ENCODE measurements at regions of chr16 and their contacts with region 1.

Region 1: DNA sequence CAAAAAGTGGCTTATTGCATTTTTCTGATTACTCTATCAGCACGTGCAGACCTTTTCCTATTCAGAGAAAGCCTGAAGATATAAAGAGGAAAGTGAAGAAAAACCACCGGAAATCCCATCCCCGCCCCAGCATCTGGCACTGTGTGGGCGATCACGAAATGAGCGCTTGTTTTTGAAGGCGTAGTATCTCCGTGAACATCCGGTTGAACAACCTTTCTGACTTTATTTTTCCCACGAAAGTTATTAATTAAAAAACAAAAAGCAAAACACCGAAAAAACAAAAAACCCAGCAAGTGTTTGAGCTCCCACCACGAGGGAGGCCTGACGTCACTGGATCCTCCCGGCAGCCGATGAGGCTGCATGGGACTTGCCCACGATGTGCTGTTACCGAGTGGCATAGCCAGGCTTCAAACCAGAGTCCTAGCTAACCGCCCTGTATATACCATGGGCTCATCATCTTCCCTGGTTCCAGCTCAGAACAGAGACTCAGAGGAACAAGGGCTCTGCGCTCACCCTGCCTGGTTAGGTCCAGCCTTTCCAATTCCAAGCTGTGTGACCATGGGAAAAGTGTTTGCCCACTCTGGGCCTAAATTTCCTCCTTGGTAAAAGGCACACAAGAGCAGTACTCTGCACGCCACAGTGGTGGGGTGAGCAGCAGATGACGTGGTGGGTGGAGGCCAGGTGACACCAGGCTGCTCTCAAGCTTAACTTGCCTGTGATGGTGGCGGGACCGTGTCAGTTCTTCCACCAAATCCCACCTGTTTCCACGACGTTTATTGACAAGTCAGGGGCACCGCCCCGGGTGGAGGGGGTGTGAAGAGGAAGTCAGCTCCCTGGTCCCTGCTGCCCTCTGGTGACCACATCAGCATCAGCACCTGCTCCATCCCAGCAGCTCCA is 34.3 kb upstream of the IL21R start:
- DNase-seq: peak; percentile 92
- ATAC-seq: peak; percentile 83
- H3K4me3 Mint-ChIP-seq: peak overlapping the region; percentile 49
- H3K27ac Mint-ChIP-seq: peak overlapping the region; percentile 95
- H3K4me1 Mint-ChIP-seq: peaks cover 36% of the 10 kb centered on the region
- H3K27me3 Mint-ChIP-seq: no peaks in the 10 kb centered on the region

Region 2: GRCh38 chr16:27154705-27155521 is 212.8 kb before region 1 on chr16:
- CTCF ChIA-PET with region 1: interaction called, 16 read pairs
- DNase-seq: peak; percentile 71
- ATAC-seq: peak; percentile 67
- H3K4me3 Mint-ChIP-seq: no peak overlapping the region
- H3K27ac Mint-ChIP-seq: no peak overlapping the region
- H3K4me1 Mint-ChIP-seq: peaks cover 8% of the 10 kb centered on the region
- H3K27me3 Mint-ChIP-seq: no peaks in the 10 kb centered on the region

Region 3: DNA sequence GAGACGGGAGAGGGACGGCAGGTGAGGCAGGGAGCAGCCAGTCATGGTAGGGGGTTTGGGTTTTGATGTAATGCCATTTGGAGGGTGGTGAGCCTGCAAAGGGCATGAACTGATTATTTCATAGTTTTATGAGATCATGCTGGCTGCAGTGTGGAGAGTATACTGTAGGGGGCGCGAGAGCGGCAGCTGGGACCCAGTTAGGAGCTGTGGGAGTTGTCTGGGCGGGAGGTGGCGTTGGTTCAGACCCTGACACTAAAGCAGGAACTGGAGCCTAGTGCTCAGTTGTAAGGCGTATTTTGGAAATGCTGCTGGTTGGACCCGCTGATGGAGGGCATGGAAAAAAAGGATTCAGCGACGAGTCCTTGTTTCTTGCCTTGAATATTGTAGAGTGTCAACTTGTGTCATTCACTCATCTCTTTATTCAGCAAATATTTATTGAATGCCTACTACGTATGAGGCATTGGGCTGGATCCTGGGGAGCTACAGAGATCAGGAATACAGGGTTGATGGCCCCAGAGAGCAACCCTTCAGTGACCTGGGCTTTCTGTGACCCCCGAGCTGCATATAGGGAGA is 188.1 kb before region 1 on chr16:
- CTCF ChIA-PET with region 1: interaction called, 104 read pairs
- DNase-seq: peak; percentile 93
- ATAC-seq: peak; percentile 98
- H3K4me3 Mint-ChIP-seq: no peak overlapping the region
- H3K27ac Mint-ChIP-seq: peak overlapping the region; percentile 65
- H3K4me1 Mint-ChIP-seq: peaks cover 23% of the 10 kb centered on the region
- H3K27me3 Mint-ChIP-seq: peaks cover 13% of the 10 kb centered on the region

Region 4: GRCh38 chr16:27228621-27229501 is 138.8 kb before region 1 on chr16:
- CTCF ChIA-PET with region 1: interaction called, 92 read pairs
- DNase-seq: no peak
- ATAC-seq: no peak
- H3K4me3 Mint-ChIP-seq: no peak overlapping the region
- H3K27ac Mint-ChIP-seq: no peak overlapping the region
- H3K4me1 Mint-ChIP-seq: peaks cover 71% of the 10 kb centered on the region
- H3K27me3 Mint-ChIP-seq: no peaks in the 10 kb centered on the region

Region 5: DNA sequence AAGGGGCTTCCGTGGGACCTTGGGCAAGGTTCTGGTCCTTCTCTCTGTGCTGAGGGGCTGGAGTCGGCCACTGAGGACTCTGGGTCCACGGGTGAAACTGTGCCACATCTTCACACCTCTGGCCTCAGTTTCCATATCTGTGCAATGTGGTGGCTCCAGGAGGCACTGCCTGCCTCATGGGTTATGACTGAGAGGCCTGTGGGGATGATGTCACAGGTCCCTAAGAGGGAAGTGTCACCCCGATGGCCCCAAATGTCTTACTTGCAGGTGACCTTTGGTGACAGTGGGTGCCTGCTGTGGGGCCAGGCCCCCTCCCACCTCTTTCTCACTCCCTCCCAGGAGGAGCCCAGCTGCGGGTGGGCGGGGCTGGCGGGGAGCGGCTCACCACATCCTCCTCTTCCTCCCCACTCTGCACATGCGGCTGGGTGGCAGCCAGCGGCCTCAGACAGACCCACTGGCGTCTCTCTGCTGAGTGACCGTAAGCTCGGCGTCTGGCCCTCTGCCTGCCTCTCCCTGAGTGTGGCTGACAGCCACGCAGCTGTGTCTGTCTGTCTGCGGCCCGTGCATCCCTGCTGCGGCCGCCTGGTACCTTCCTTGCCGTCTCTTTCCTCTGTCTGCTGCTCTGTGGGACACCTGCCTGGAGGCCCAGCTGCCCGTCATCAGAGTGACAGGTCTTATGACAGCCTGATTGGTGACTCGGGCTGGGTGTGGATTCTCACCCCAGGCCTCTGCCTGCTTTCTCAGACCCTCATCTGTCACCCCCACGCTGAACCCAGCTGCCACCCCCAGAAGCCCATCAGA is 34.3 kb after region 1 on chr16 and contains the start of gene IL21R:
- CTCF ChIA-PET with region 1: interaction called, 11 read pairs
- DNase-seq: peak; percentile 92
- ATAC-seq: peak; percentile 64
- H3K4me3 Mint-ChIP-seq: peak within 1 kb of the TSS; percentile 96
- H3K27ac Mint-ChIP-seq: peak within 1 kb of the TSS; percentile 96
- H3K4me1 Mint-ChIP-seq: peaks cover 63% of the 10 kb centered on the region
- H3K27me3 Mint-ChIP-seq: no peaks in the 10 kb centered on the region
- total RNA-seq, gene IL21R: 24.6 to 38.0 TPM

Region 6: GRCh38 chr16:27449434-27450195 is 81.9 kb after region 1 on chr16:
- CTCF ChIA-PET with region 1: interaction called, 14 read pairs
- DNase-seq: peak; percentile 91
- ATAC-seq: peak; percentile 75
- H3K4me3 Mint-ChIP-seq: peak overlapping the region; percentile 42
- H3K27ac Mint-ChIP-seq: peak overlapping the region; percentile 92
- H3K4me1 Mint-ChIP-seq: peaks cover 69% of the 10 kb centered on the region
- H3K27me3 Mint-ChIP-seq: no peaks in the 10 kb centered on the region